ENCODE measurements at regions of chr22 and their contacts with region 1.

Region 1: GRCh38 chr22:45994491-45995404 is 17.8 kb upstream of the WNT7B start:
- DNase-seq: peak; percentile 84 to 91
- ATAC-seq: peak; percentile 27 to 52 (median 44)
- H3K4me3 ChIP-seq: no peak overlapping the region
- H3K27ac ChIP-seq: peak overlapping the region in 8 of 10 donors; percentile 17 to 98 (median 86)
- H3K4me1 ChIP-seq: peaks cover 33 to 67% (median 55%) of the 10 kb centered on the region in 9 donors
- H3K27me3 ChIP-seq: no peaks in the 10 kb centered on the region
- CTCF ChIP-seq: peak; percentile 97 to 99 (median 99)

Region 2: DNA sequence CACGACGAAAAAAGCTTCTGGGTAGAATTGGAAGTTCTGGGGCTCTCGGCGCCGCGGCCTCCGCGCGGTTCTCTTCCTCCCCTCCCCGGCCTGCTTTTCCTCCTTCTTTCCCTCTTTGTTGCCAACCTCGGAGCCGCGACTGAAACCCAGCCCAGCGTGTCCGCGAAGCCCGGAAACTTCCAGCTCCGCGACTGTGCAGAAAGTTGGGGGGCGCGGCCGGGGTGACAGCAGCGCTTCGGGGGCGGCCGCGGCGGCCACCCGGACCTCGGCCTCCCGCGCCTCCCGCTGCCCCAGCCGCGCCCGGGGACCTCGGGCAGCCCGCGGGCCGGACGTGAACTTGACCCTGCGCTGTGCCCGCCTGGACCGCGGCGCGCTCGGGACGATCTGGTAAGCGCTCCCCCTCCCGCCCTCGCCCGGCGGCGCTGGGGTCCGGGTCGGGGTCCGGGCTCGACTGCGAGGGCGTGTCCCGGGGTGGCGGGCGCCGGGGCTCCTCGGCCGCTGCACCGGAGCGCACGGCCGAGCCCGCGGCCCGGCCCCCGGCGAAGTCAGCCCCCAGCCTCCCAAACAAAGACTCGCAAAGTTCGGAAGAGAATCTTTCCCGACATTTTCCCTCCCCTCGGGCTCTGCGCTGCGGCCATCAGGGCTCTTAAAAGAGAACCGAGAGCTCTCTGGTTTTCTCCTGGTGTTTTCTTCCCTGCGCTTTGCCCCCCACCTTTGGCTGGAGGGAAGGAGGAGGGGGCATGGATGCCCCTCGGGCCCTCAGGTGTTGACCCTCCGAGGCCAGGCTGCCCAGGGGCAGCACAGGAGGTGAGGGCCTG is 50.1 kb after region 1 on chr22:
- intact Hi-C with region 1: loop called in 1 of 10 experiments (anchors 5 kb)
- DNase-seq: peak in 1 of 2 donors; percentile 66
- ATAC-seq: peak; percentile 11 to 57 (median 33)
- H3K4me3 ChIP-seq: peak overlapping the region; percentile 46 to 77 (median 64)
- H3K27ac ChIP-seq: peak overlapping the region; percentile 91 to 100 (median 96)
- H3K4me1 ChIP-seq: peaks cover 16 to 90% (median 69%) of the 10 kb centered on the region in 9 donors
- H3K27me3 ChIP-seq: no peaks in the 10 kb centered on the region
- CTCF ChIP-seq: no peak

Region 3: DNA sequence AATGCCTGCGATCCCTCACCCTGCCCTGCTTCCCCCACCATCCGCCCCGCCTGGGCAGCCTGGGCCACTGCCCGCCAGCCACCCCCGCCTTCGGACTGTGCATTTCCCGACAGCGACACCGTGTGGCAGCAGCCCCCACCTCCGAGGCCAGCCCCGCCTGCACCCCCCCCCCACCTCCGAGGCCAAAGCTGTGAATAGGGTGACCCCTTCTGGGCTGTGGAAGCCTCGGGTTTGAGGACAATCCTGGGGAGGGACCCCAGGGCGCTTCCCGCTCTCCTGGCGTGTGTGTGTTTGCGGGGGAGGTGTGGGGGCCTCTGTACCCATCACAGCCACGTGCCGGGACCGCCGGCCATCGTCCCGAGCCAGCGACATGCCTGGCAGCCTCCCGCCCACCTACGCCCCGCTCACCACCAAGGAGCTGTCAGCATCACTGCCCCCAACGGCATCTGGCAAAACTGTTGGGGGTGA is 121.8 kb after region 1 on chr22:
- intact Hi-C with region 1: loop called in 7 of 10 experiments (anchors 1 to 5 kb)
- DNase-seq: peak; percentile 95 to 96
- ATAC-seq: peak; percentile 73 to 87 (median 82)
- H3K4me3 ChIP-seq: peak overlapping the region in 1 of 10 donors; percentile 2
- H3K27ac ChIP-seq: peak overlapping the region; percentile 20 to 94 (median 78)
- H3K4me1 ChIP-seq: peaks cover 28 to 71% (median 54%) of the 10 kb centered on the region in 9 donors
- H3K27me3 ChIP-seq: no peaks in the 10 kb centered on the region
- CTCF ChIP-seq: peak; percentile 70 to 84 (median 77)

Region 4: DNA sequence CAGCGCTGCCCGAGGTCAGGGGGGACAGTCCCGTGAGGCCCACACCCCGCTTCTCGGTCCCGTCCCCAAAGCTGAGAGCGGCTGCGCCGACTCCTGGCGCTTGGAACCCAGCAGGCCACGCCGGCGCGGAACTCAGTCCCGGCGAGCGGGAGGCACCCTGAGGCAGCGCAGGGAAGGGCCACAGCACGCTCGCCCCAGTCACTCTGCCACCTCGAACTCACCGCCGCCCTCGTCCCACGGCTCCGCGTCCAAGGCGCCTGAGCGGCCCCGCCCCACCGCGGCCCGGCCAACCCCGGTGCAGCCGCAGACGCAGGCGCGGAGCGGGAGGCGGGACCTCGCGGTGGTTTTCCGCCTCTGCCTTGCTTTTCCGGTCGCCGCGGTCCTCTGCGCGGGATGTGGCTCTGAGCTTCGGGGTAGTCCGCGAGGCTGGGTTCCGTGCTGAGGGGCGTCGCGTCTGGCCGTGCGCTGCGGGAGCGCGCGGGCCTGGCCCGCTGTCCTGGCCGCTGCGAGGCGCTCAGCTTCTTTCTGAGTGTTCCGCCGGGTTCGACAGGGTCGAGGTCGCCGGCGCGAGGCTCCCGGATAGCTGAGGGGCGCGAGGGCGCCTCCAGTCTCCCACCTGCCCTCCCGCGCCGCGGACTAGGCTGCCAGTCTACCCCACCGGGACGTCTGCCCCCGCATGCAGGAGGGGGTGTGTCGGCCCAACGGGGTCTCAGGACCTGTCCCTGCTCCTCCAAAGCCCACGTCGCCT is 255.5 kb after region 1 on chr22 and contains the start of gene CDPF1:
- intact Hi-C with region 1: loop called in 1 of 10 experiments (anchors 10 kb)
- DNase-seq: peak; percentile 93 to 94
- ATAC-seq: peak; percentile 92 to 97 (median 94)
- H3K4me3 ChIP-seq: peak within 1 kb of the TSS; percentile 48 to 93 (median 81)
- H3K27ac ChIP-seq: peak within 1 kb of the TSS; percentile 84 to 96 (median 94)
- H3K4me1 ChIP-seq: peaks cover 13 to 58% (median 43%) of the 10 kb centered on the region in 9 donors
- H3K27me3 ChIP-seq: no peaks in the 10 kb centered on the region
- CTCF ChIP-seq: no peak
- total RNA-seq, gene CDPF1: 6.3 to 10.4 (median 7.5) TPM

Region 5: DNA sequence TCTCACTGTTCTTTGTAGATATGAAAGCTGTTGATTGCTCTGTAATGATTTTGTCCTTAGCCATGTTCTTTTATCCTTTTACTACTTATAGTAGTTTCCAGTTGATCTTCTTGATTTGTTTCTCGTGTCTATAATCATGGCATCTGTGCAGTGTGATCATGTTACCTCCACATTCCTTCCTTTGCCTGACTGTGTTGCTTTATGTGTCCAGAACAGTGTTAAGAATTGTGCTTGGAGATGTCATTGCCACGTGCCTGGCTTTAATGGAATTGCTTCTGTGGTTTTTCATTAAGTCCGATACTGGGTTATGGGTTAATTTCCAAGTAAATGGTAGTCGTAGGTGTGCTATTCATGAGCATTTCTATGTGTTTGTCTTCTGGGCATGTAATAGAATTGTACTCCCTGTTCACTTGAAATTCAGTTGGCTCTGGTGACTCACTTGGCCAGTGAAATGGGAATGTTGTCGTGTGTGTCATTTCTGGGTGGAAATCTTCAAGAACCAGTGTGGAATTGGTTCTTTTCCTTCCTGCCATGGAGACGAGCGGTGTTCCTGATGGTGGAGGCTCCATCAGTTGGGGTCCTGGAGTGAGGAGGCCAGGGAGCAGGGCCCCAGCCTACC is 308.7 kb after region 1 on chr22:
- intact Hi-C with region 1: loop called in 2 of 10 experiments (anchors 5 kb)
- DNase-seq: no peak
- ATAC-seq: no peak
- H3K4me3 ChIP-seq: no peak overlapping the region
- H3K27ac ChIP-seq: no peak overlapping the region
- H3K4me1 ChIP-seq: peaks cover 0 to 4% (median 0%) of the 10 kb centered on the region in 9 donors
- H3K27me3 ChIP-seq: no peaks in the 10 kb centered on the region
- CTCF ChIP-seq: no peak

Region 6: DNA sequence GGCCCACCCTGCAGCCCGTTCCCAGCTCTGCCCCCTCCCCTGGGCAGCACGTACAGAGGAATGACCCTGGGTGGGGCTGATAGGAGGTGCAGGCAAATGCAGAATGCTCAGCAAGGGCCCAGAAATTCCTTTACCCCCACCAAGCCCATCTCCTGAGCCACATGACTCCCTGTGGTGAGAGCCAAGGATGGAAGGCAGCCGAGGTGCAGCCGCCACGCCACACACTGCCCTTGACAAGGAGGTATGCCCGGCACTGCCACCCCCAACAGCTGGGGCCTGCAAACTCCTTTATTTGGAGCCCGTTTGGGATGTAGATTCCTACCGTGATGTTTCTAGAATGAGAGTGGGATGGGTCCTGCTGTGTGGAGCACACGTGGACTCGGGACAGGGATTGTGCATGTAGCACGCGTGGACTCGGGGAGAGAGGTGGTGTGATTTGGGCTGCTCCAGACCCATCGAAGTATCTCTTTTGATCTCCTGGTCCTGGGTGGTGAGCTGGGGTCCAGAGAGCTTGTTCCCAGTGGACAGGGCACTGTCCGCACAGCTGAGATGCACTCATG is 314.9 kb after region 1 on chr22:
- intact Hi-C with region 1: loop called in 7 of 10 experiments (anchors 5 to 10 kb)
- DNase-seq: peak in 1 of 2 donors; percentile 36
- ATAC-seq: peak; percentile 67 to 89 (median 77)
- H3K4me3 ChIP-seq: no peak overlapping the region
- H3K27ac ChIP-seq: peak overlapping the region in 2 of 10 donors; percentile 5 to 28
- H3K4me1 ChIP-seq: peaks cover 0 to 10% (median 0%) of the 10 kb centered on the region in 9 donors
- H3K27me3 ChIP-seq: no peaks in the 10 kb centered on the region
- CTCF ChIP-seq: no peak

Region 7: GRCh38 chr22:46317646-46318045 is 322.9 kb after region 1 on chr22:
- intact Hi-C with region 1: loop called in 8 of 10 experiments (anchors 5 to 10 kb)
- DNase-seq: no peak
- ATAC-seq: no peak
- H3K4me3 ChIP-seq: no peak overlapping the region
- H3K27ac ChIP-seq: no peak overlapping the region
- H3K4me1 ChIP-seq: peaks cover 0 to 4% (median 0%) of the 10 kb centered on the region in 9 donors
- H3K27me3 ChIP-seq: no peaks in the 10 kb centered on the region
- CTCF ChIP-seq: no peak

Measured in heart right ventricle (tissue), 16 donors.